T-cell (primary cell): ENCODE measurements at regions of chr15 and their contacts with region 1.

Region 1: DNA sequence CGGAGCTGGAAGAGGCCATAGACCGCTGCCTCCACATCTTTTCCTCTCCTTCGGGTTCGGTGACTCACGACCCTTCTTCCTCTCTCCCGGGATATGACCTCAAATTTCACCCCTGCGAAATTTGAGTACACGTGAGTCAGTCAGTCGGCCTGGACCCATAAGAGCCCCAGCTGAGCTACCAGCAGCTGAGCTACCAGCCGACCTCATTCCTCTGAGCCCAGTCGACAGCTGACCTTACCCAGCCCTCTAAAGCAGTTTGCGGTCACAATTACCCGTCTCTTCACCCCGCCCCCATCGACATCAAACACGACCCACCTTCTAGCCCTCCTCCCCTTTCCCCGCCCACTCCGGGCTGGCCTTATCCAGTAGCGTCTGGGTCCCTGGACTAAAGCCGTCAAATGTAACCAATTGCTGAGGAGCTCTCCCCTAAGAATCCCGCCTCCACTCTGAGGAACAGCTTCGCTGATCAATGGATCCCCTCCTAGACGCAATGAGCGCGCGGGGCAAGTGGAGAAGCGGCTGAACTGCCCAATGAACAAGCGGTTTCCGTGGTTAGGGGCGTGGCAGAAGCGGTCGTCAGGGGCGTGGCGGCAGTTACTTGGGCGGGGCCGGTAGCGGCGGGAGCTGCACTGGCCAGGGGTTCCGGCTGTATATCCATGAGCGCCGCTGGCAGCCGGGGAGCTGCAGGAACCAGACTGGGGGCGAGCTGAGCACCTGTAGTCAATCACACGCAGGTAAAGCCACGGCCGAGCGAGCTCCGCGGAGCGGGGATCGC is at the start of gene ABHD2:
- DNase-seq: peak; percentile 93 to 98 (median 96)
- ATAC-seq: peak; percentile 95 to 97 (median 96)
- H3K4me3 ChIP-seq: peak within 1 kb of the TSS; percentile 61 to 96
- H3K4me3 Mint-ChIP-seq: no peak within 1 kb of the TSS
- H3K27ac ChIP-seq: peak within 1 kb of the TSS; percentile 69
- H3K27ac Mint-ChIP-seq: peak within 1 kb of the TSS; percentile 95 to 96
- H3K4me1 ChIP-seq: peaks cover 7 to 34% of the 10 kb centered on the region in 2 experiments
- H3K4me1 Mint-ChIP-seq: peaks cover 31 to 35% (median 35%) of the 10 kb centered on the region in 3 donors
- H3K27me3 ChIP-seq: no peaks in the 10 kb centered on the region
- H3K27me3 Mint-ChIP-seq: no peaks in the 10 kb centered on the region
- total RNA-seq, gene ABHD2: 52.5 to 70.8 (median 58.5) TPM

Region 2: GRCh38 chr15:88904624-88905327 is 183.2 kb before region 1 on chr15:
- CTCF ChIA-PET with region 1: interaction called in 1 of 2 experiments, 23 read pairs
- POLR2A ChIA-PET with region 1: no interaction called
- DNase-seq: peak; percentile 87 to 98 (median 95)
- ATAC-seq: peak; percentile 98 to 100 (median 98)
- H3K4me3 ChIP-seq: peak overlapping the region in 1 of 2 donors; percentile 35
- H3K4me3 Mint-ChIP-seq: peak overlapping the region in 2 of 3 donors; percentile 47 to 73
- H3K27ac ChIP-seq: peak overlapping the region; percentile 82
- H3K27ac Mint-ChIP-seq: peak overlapping the region; percentile 98 to 99
- H3K4me1 ChIP-seq: peaks cover 18 to 41% of the 10 kb centered on the region in 2 experiments
- H3K4me1 Mint-ChIP-seq: peaks cover 38 to 53% (median 52%) of the 10 kb centered on the region in 3 donors
- H3K27me3 ChIP-seq: no peaks in the 10 kb centered on the region
- H3K27me3 Mint-ChIP-seq: no peaks in the 10 kb centered on the region

Region 3: DNA sequence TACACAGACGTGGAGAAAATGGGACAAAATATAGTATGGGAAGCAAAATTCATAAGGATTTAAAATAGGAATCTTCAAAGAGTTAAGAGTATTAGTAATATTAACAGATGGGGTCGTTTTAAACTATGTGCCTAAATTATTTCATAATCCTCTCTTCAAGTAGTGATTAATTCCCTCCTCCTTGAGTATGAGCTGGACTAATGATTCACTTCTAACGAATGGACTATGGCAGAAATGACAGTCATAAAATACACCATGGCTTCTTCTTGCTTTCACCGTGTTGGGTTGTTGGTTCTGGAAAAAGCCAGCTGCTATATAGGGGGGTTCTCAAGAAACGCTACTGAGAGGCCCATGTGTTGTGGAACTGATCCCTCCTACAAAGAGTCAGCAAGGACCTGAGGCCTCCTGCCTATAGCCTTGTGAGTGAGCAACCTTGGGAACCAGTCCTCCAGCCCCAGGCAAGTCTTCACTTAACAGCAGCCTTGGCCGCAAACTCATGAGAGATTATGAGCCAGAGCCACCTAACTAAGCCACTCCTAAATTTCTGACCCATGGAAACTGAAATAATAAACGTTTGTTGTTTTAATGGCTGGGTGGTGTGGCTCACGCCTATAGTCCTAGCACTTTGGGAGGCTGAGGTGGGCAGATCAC is 64.6 kb before region 1 on chr15:
- CTCF ChIA-PET with region 1: interaction called in 1 of 2 experiments, 12 read pairs
- POLR2A ChIA-PET with region 1: no interaction called
- DNase-seq: no peak
- ATAC-seq: no peak
- H3K4me3 ChIP-seq: no peak overlapping the region
- H3K4me3 Mint-ChIP-seq: no peak overlapping the region
- H3K27ac ChIP-seq: no peak overlapping the region
- H3K27ac Mint-ChIP-seq: no peak overlapping the region
- H3K4me1 ChIP-seq: no peaks in the 10 kb centered on the region
- H3K4me1 Mint-ChIP-seq: no peaks in the 10 kb centered on the region
- H3K27me3 ChIP-seq: peaks cover 0 to 14% of the 10 kb centered on the region in 2 experiments
- H3K27me3 Mint-ChIP-seq: peaks cover 4 to 14% of the 10 kb centered on the region in 2 donors

Region 4: DNA sequence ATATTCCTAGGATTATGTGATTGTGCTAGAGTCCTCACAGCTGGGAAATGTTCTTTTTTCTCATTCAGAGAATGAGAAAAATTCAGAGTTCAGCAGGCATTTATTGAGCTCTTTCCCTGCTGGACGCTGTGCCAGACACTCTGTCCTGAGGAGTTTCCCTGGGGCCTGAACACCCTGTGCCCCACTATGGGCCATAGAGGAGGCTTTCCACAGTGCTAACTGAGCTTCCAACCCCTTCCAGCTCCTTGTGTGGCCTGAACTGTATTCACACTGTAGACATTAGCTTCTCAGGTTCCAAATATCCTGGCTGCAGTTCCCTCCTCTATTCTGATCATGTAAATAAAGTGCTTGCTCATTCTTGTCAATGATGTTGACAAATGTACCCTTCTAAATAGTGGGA is 10.3 kb after region 1 on chr15:
- CTCF ChIA-PET with region 1: interaction called in 1 of 2 experiments, 10 read pairs
- POLR2A ChIA-PET with region 1: interaction called in 1 of 2 experiments, 4 read pairs
- DNase-seq: no peak
- ATAC-seq: no peak
- H3K4me3 ChIP-seq: no peak overlapping the region
- H3K4me3 Mint-ChIP-seq: no peak overlapping the region
- H3K27ac ChIP-seq: no peak overlapping the region
- H3K27ac Mint-ChIP-seq: no peak overlapping the region
- H3K4me1 ChIP-seq: no peaks in the 10 kb centered on the region
- H3K4me1 Mint-ChIP-seq: peaks cover 40 to 48% (median 44%) of the 10 kb centered on the region in 3 donors
- H3K27me3 ChIP-seq: no peaks in the 10 kb centered on the region
- H3K27me3 Mint-ChIP-seq: no peaks in the 10 kb centered on the region

Region 5: GRCh38 chr15:89129123-89129815 is 41.3 kb after region 1 on chr15:
- CTCF ChIA-PET with region 1: interaction called, 16 to 18 read pairs
- POLR2A ChIA-PET with region 1: no interaction called
- DNase-seq: peak in 32 of 35 experiments; percentile 23 to 75 (median 46)
- ATAC-seq: peak; percentile 55 to 73 (median 63)
- H3K4me3 ChIP-seq: no peak overlapping the region
- H3K4me3 Mint-ChIP-seq: no peak overlapping the region
- H3K27ac ChIP-seq: peak overlapping the region; percentile 12
- H3K27ac Mint-ChIP-seq: no peak overlapping the region
- H3K4me1 ChIP-seq: peaks cover 0 to 25% of the 10 kb centered on the region in 2 experiments
- H3K4me1 Mint-ChIP-seq: peaks cover 7 to 28% (median 14%) of the 10 kb centered on the region in 3 donors
- H3K27me3 ChIP-seq: no peaks in the 10 kb centered on the region
- H3K27me3 Mint-ChIP-seq: no peaks in the 10 kb centered on the region

Region 6: DNA sequence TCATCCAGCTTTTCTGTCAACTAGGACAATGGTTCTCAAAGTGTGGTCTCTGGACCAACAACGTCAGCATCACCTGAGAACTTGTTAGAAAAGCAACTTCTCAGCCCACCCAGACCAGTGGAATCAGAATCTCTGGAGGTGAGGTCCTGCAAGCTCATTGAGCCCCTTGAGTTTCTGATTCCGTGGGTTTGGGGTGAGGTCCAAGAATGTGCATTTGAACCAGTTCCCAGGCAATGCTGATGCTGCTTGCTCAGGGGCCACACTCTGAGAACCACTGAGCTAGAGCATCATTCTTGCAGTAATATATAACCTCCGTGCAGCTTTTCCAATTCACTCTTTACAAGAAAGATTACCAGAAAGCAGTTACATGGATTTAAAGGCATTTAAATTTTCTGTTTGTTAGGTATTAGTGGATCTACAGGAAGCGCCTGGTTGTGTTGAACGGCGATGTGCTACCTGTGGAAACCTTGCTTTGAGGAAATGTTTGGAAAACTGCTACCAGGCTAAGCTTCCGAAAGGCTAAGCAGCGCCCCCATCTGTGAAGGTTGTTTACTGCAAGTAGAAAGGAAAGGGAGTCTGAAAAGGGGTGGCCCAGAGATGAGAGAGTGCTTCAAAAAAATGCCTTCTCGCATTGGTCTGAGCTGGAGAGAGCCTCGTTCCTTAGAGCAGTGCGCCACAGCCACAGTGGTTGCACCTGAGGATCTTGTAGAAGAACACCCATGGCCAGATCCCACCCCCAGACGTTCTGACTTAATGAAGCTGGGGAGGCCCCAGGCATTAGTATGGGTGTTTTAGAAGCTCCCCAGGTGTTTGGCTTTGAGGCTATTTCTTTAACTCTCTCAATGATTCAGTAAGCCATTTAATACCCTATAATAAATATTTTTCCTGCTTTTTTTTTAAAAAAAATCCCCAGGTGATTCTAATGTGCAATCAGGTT is 83.4 kb after region 1 on chr15:
- CTCF ChIA-PET with region 1: no interaction called
- POLR2A ChIA-PET with region 1: no interaction called
- DNase-seq: peak in 24 of 35 experiments; percentile 3 to 50 (median 16)
- ATAC-seq: no peak
- H3K4me3 ChIP-seq: no peak overlapping the region
- H3K4me3 Mint-ChIP-seq: no peak overlapping the region
- H3K27ac ChIP-seq: no peak overlapping the region
- H3K27ac Mint-ChIP-seq: no peak overlapping the region
- H3K4me1 ChIP-seq: no peaks in the 10 kb centered on the region
- H3K4me1 Mint-ChIP-seq: peaks cover 0 to 9% (median 8%) of the 10 kb centered on the region in 3 donors
- H3K27me3 ChIP-seq: no peaks in the 10 kb centered on the region
- H3K27me3 Mint-ChIP-seq: no peaks in the 10 kb centered on the region

Region 7: GRCh38 chr15:89192136-89192535 is 104.1 kb after region 1 on chr15:
- CTCF ChIA-PET with region 1: no interaction called
- POLR2A ChIA-PET with region 1: interaction called in 1 of 2 experiments, 14 read pairs
- DNase-seq: no peak
- ATAC-seq: no peak
- H3K4me3 ChIP-seq: no peak overlapping the region
- H3K4me3 Mint-ChIP-seq: no peak overlapping the region
- H3K27ac ChIP-seq: no peak overlapping the region
- H3K27ac Mint-ChIP-seq: no peak overlapping the region
- H3K4me1 ChIP-seq: no peaks in the 10 kb centered on the region
- H3K4me1 Mint-ChIP-seq: peaks cover 0 to 5% (median 5%) of the 10 kb centered on the region in 3 donors
- H3K27me3 ChIP-seq: no peaks in the 10 kb centered on the region
- H3K27me3 Mint-ChIP-seq: no peaks in the 10 kb centered on the region